CD8-positive, alpha-beta T cell (primary cell): ENCODE measurements at regions of chr22 and their contacts with region 1.

Region 1: DNA sequence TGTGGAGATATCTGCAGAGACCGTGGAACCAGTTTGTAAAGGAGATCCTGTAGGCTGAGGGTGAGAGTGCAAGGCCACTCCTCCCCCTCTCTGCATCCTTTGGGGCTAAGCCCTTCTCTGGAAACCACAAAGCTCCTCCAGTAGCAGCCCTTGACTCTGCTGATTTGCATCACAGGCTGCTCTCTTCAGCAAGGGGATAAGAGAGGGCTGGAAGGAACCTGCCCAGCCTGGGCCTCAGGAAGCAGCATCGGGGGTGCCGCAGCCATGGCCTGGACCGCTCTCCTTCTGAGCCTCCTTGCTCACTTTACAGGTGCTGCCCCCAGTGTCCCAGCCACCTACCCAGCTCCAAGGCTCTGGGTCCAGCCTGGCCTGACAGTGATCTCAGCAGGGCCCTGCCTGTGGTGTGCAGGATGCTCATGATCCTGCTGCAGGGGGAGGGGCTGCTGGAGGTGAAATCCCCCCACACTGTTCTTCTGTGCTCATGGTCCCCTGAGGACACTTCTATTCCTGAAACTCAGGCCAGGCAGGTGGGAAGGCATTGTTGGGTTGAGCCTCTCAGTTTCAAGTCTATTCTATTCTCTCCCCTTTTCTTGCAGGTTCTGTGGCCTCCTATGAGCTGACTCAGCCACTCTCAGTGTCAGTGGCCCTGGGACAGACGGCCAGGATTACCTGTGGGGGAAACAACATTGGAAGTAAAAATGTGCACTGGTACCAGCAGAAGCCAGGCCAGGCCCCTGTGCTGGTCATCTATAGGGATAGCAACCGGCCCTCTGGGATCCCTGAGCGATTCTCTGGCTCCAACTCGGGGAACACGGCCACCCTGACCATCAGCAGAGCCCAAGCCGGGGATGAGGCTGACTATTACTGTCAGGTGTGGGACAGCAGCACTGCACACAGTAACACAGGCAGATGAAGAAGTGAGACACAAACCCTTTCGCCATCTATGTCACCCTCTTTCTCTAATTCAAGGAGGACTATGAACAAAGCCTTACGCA is 68.5 kb upstream of the IGLL5 start:
- DNase-seq: peak in 8 of 9 experiments; percentile 23 to 83 (median 56)
- ATAC-seq: peak; percentile 42
- H3K4me3 ChIP-seq: peak overlapping the region; percentile 50 to 51
- H3K4me3 Mint-ChIP-seq: peak overlapping the region; percentile 75
- H3K27ac ChIP-seq: peak overlapping the region; percentile 48 to 80
- H3K27ac Mint-ChIP-seq: peak overlapping the region; percentile 93
- H3K4me1 ChIP-seq: peaks cover 94% of the 10 kb centered on the region
- H3K4me1 Mint-ChIP-seq: peaks cover 98% of the 10 kb centered on the region
- H3K27me3 ChIP-seq: no peaks in the 10 kb centered on the region
- H3K27me3 Mint-ChIP-seq: no peaks in the 10 kb centered on the region
- CTCF ChIP-seq: no peak

Region 2: DNA sequence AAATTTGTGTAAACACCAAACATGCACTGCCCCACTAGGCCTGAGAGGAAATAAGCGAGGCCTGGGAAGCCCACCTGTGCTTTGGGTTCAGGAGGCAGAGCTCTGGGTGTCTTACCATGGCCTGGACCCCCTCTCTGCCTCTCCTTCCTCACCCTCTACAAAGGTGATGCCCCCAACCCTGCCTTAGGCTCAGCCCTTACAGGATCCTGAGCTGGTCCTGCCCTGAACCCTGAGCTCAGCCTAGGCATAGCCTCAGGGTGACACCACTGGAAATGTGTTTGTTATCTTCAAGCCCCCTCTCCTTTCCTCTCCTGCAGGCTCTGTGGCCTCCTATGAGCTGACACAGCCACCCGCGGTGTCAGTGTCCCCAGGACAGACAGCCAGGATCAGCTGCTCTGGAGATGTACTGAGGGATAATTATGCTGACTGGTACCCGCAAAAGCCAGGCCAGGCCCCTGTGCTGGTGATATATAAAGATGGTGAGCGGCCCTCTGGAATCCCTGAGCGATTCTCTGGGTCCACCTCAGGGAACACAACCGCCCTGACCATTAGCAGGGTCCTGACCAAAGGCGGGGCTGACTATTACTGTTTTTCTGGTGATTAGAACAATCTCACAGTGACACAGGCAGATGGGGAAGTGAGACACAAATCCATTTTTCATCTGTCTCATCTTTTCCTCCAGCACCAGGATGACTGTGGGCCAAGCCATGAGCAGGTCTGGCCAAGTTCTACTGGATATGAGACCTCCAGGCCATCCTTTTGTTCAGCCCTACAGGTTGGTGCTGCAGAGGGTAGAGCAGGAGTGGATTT is 57.0 kb before region 1 on chr22:
- CTCF ChIA-PET with region 1: interaction called, 108 read pairs
- POLR2A ChIA-PET with region 1: interaction called, 14 read pairs
- intact Hi-C with region 1: no loop called
- DNase-seq: no peak
- ATAC-seq: no peak
- H3K4me3 ChIP-seq: peak overlapping the region in 1 of 2 experiments; percentile 58
- H3K4me3 Mint-ChIP-seq: peak overlapping the region; percentile 68
- H3K27ac ChIP-seq: peak overlapping the region in 1 of 2 experiments; percentile 36
- H3K27ac Mint-ChIP-seq: peak overlapping the region; percentile 82
- H3K4me1 ChIP-seq: peaks cover 8% of the 10 kb centered on the region
- H3K4me1 Mint-ChIP-seq: peaks cover 55% of the 10 kb centered on the region
- H3K27me3 ChIP-seq: no peaks in the 10 kb centered on the region
- H3K27me3 Mint-ChIP-seq: no peaks in the 10 kb centered on the region
- CTCF ChIP-seq: no peak

Region 3: GRCh38 chr22:22838148-22838786 is 19.1 kb after region 1 on chr22:
- CTCF ChIA-PET with region 1: interaction called, 6 read pairs
- POLR2A ChIA-PET with region 1: interaction called, 8 read pairs
- intact Hi-C with region 1: loop called in 1 of 2 experiments (anchors 2 kb)
- DNase-seq: peak in 1 of 9 experiments; percentile 25
- ATAC-seq: no peak
- H3K4me3 ChIP-seq: no peak overlapping the region
- H3K4me3 Mint-ChIP-seq: no peak overlapping the region
- H3K27ac ChIP-seq: peak overlapping the region in 1 of 2 experiments; percentile 31
- H3K27ac Mint-ChIP-seq: peak overlapping the region; percentile 30
- H3K4me1 ChIP-seq: peaks cover 12% of the 10 kb centered on the region
- H3K4me1 Mint-ChIP-seq: peaks cover 31% of the 10 kb centered on the region
- H3K27me3 ChIP-seq: no peaks in the 10 kb centered on the region
- H3K27me3 Mint-ChIP-seq: no peaks in the 10 kb centered on the region
- CTCF ChIP-seq: no peak

Region 4: GRCh38 chr22:22855617-22856308 is 36.6 kb after region 1 on chr22:
- CTCF ChIA-PET with region 1: interaction called, 248 read pairs
- POLR2A ChIA-PET with region 1: interaction called, 3 read pairs
- intact Hi-C with region 1: no loop called
- DNase-seq: peak in 8 of 9 experiments; percentile 19 to 69 (median 40)
- ATAC-seq: peak; percentile 49
- H3K4me3 ChIP-seq: no peak overlapping the region
- H3K4me3 Mint-ChIP-seq: no peak overlapping the region
- H3K27ac ChIP-seq: no peak overlapping the region
- H3K27ac Mint-ChIP-seq: no peak overlapping the region
- H3K4me1 ChIP-seq: no peaks in the 10 kb centered on the region
- H3K4me1 Mint-ChIP-seq: peaks cover 1% of the 10 kb centered on the region
- H3K27me3 ChIP-seq: no peaks in the 10 kb centered on the region
- H3K27me3 Mint-ChIP-seq: no peaks in the 10 kb centered on the region
- CTCF ChIP-seq: peak; percentile 35

Region 5: DNA sequence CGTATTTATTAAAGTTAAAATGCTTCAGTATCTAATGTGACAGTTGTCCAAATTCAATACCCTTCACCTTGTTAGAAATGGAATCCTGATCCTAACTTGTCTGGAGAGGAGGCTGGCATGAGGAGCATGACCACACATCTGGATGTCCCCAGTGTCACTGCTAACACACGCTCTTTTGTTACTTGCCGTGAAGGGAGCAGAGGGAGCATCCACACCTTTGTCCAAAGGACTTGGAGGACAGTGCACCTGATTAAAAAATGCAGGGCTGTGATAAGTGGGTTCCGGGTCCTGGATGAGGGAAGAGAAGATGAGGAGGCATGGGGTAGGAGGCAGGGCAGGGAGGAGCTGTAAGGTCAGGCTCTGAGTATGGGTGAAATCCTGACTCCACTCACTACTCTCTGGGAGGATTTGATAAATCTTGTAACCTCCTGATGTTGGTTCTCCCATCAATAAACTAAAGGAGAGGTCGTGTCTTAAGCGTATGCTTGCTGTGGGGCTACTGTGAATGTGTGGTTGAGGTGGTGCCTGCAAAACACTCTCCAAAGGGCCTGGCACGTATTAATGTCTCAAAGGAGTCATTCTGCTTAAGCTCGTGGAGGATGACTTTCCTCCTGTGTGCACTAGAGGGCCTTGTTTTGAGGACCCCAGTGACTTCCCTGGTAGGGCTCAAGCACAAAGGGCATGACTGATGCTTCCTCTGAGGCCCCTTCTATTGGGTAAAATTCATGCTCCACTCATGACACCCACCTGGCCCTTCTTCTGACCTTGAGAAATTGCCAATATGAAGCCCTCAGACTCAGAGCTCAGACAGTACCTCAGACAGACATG is 51.6 kb after region 1 on chr22:
- CTCF ChIA-PET with region 1: interaction called, 12 read pairs
- POLR2A ChIA-PET with region 1: interaction called, 5 read pairs
- intact Hi-C with region 1: no loop called
- DNase-seq: peak in 3 of 9 experiments; percentile 29 to 47 (median 46)
- ATAC-seq: no peak
- H3K4me3 ChIP-seq: no peak overlapping the region
- H3K4me3 Mint-ChIP-seq: no peak overlapping the region
- H3K27ac ChIP-seq: no peak overlapping the region
- H3K27ac Mint-ChIP-seq: no peak overlapping the region
- H3K4me1 ChIP-seq: peaks cover 10% of the 10 kb centered on the region
- H3K4me1 Mint-ChIP-seq: peaks cover 26% of the 10 kb centered on the region
- H3K27me3 ChIP-seq: no peaks in the 10 kb centered on the region
- H3K27me3 Mint-ChIP-seq: no peaks in the 10 kb centered on the region
- CTCF ChIP-seq: no peak